Aorta (tissue), 5 donors: ENCODE measurements at regions of chr1 and their contacts with region 1.

Region 1: GRCh38 chr1:59759156-59759925 is 55.4 kb upstream of the HOOK1 start:
- DNase-seq: peak; percentile 88 to 89
- ATAC-seq: peak; percentile 98
- H3K4me3 ChIP-seq: peak overlapping the region in 1 of 2 donors; percentile 24
- H3K27ac ChIP-seq: no peak overlapping the region
- H3K4me1 ChIP-seq: no peaks in the 10 kb centered on the region
- H3K27me3 ChIP-seq: no peaks in the 10 kb centered on the region

Region 2: DNA sequence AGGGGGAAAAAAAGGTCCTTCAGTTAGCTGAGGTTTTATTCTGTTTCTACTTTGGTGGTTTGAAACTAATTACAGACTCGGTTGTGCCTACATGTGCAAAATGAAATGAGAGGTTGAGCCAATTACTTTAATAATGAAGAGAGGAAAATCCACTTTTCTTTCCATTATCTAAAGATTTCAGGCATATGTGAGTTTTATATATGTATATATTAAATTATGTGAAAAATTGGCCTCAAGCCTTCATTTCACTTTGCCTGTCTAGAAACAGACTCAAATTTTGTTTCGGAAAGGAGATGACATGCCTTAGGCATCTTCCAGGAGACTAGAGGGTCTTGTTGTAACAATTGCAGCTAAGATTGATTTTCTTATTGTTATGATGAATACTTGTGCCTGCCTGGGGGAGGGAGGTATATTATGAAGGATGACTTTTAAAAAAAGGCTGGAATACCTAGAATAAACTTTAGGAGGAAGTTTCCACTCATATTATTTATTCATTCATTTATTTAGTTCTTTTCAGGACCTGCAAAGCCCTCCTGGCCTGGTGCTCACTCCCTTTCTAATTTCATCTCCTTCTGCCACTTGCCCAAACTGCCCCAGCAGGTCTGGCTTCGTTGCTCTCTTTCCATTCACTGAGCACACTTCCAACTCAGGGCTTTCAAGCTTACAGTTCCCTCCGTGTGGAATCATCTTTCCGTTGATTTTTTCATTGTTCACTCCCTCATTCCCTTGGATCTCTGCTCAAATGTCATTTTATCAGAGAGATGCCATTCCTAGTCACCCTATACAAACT is 38.8 kb before region 1 on chr1:
- intact Hi-C with region 1: loop called in 1 of 2 experiments (anchors 5 kb)
- DNase-seq: no peak
- ATAC-seq: no peak
- H3K4me3 ChIP-seq: no peak overlapping the region
- H3K27ac ChIP-seq: no peak overlapping the region
- H3K4me1 ChIP-seq: no peaks in the 10 kb centered on the region
- H3K27me3 ChIP-seq: no peaks in the 10 kb centered on the region